OCI-LY7 (cell line): ENCODE measurements at regions of chr6 and their contacts with region 1.

Region 1: GRCh38 chr6:43714311-43715055 is 26.9 kb upstream of the MRPS18A start:
- DNase-seq: peak; percentile 81
- H3K4me3 ChIP-seq: peak overlapping the region; percentile 49
- H3K27ac ChIP-seq: peak overlapping the region; percentile 93
- H3K4me1 ChIP-seq: peaks cover 72% of the 10 kb centered on the region
- CTCF ChIP-seq: 0 out of 2 replicates have a peak, but pooled peaks have one; percentile 5

Region 2: GRCh38 chr6:43629505-43630300 is 84.8 kb before region 1 on chr6:
- CTCF ChIA-PET with region 1: no interaction called
- POLR2A ChIA-PET with region 1: interaction called, 6 read pairs
- intact Hi-C with region 1: loop called (anchors 10 kb)
- DNase-seq: peak; percentile 99
- H3K4me3 ChIP-seq: peak overlapping the region; percentile 75
- H3K27ac ChIP-seq: peak overlapping the region; percentile 95
- H3K4me1 ChIP-seq: peaks cover 50% of the 10 kb centered on the region
- CTCF ChIP-seq: no peak

Region 3: DNA sequence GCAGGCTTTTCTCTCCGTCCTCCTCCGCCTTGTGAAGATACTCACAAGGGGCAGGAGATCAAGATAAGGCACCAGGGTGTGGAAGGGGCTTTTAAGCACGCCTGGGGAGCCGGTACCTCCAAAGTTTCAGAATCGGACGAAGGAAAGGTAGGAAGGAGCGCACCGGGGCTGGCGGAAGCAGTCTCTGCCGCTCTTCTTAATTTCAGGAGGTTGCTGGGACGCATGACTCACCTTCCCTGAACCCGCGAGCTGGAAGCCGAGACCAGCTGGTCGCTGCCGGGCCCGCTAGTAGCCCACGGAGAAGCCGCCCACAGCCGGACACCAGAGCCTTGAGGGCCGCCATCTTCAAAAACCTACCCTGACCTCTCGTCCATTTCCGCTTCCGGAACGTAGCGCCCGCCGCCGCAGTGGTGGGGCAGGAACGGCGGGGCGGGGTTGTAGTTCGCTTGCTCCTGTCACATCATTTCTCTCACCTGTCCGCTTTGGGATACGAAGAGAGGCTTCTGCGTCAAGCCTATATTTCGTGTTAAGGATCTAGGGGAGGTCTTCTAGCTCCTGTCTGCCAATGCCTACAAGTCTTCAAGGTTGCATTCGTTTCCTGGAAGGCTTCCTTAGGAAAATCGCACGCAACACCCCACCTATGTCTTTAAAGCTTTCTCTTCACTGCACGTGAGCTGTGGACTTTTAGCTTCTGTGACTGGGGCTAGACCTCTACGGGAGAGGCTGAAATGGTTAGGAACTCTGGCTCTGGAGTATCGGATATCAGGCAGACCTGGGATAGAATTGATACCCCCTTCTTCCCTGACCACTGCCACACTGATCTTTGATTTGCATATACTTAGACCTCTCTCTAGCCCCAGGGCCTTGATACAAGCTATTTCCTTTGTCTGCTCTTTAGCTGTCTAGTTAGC is 26.8 kb before region 1 on chr6 and contains the start of gene MRPS18A:
- CTCF ChIA-PET with region 1: interaction called, 3 read pairs
- POLR2A ChIA-PET with region 1: interaction called, 12 read pairs
- intact Hi-C with region 1: loop called (anchors 1 kb)
- DNase-seq: peak; percentile 81
- H3K4me3 ChIP-seq: peak within 1 kb of the TSS; percentile 98
- H3K27ac ChIP-seq: peak within 1 kb of the TSS; percentile 38
- H3K4me1 ChIP-seq: peaks cover 42% of the 10 kb centered on the region
- CTCF ChIP-seq: no peak
- total RNA-seq, gene MRPS18A: 57.3 and 86.1 TPM in 2 replicates

Region 4: DNA sequence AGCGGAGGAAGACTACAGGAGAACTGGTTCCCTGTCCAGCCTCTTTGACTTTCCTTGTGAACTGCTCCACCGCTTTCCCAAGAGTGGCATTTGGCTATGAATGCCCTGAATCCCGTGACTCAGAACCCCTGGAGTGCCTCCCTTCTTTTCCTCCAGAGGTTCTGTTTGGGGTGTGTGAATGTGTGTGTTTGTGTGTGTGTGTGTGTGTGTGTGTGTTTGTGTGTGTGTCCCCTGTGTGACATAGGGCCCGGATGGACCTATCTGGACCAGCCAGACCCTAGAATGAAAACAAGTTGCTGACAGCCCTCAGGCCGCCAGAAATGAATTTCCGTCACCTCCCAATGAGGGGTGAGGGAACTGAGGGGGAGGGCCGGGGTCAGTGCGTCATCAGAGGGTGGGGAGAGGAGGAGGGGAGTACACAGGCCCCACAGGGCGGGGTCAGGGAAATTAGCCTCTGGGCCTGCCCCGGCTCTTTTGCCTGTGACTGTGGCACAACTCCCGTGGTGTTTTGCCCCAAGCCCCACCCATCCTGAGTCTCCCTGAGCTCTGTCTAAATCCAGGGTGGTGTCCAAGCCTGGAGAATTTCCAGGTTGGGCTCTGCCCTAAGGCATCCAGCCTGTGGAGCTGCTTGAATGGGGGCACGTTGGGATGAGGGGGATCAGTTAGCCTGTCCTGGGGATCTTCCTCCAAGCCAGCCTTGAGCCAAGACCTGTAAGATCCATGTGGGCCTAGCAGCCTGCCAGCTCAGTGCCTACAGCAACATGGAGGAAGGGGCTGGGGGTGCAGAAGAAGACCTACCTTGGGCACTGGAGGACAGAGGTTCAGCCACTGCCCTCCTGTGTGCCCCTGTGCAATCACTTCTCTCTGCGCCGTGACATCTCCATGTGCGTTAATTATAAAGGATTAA is 11.7 kb before region 1 on chr6:
- CTCF ChIA-PET with region 1: interaction called, 17 read pairs
- POLR2A ChIA-PET with region 1: interaction called, 36 read pairs
- intact Hi-C with region 1: loop called (anchors 1 kb)
- DNase-seq: peak; percentile 62
- H3K4me3 ChIP-seq: no peak overlapping the region
- H3K27ac ChIP-seq: no peak overlapping the region
- H3K4me1 ChIP-seq: peaks cover 59% of the 10 kb centered on the region
- CTCF ChIP-seq: no peak

Region 5: GRCh38 chr6:43733471-43734293 is 19.2 kb after region 1 on chr6:
- CTCF ChIA-PET with region 1: no interaction called
- POLR2A ChIA-PET with region 1: interaction called, 6 read pairs
- intact Hi-C with region 1: loop called (anchors 1 kb)
- DNase-seq: peak; percentile 68
- H3K4me3 ChIP-seq: no peak overlapping the region
- H3K27ac ChIP-seq: peak overlapping the region; percentile 58
- H3K4me1 ChIP-seq: peaks cover 23% of the 10 kb centered on the region
- CTCF ChIP-seq: no peak

Region 6: GRCh38 chr6:43779852-43780236 is 65.4 kb after region 1 on chr6:
- CTCF ChIA-PET with region 1: no interaction called
- POLR2A ChIA-PET with region 1: no interaction called
- intact Hi-C with region 1: no loop called
- DNase-seq: no peak
- H3K4me3 ChIP-seq: no peak overlapping the region
- H3K27ac ChIP-seq: no peak overlapping the region
- H3K4me1 ChIP-seq: peaks cover 15% of the 10 kb centered on the region
- CTCF ChIP-seq: no peak